ENCODE measurements at regions of chr6 and their contacts with region 1.

Region 1: DNA sequence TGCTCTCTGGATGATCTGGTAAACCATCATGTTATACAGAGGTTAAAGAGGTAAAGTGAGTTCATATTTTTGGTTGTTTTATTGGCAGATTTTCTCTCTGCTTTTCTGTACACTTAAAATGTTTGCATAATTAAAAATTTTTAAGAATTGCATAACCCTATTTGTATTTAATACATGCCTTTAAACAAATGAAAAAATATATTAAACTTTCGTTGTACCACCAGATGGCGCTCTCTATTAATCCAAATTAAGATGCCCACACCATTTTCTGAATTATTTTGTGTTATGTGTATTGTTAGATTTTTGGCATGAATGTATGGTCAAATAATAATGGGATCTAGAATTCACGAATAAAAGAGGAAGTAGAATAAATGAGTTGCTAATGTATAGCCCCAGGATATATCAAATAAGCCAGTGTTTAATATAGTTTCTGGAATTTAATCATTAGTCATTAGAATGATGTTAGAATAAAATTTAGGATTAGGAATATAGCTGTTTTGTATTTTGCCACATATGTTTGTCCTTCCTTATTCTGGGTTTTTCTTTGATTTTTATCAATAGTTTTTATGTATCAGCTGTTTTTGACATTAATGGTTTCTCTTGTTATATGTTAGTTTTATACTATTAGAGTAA is 38.9 kb downstream of the SMAP1 start:
- DNase-seq: no peak
- H3K4me3 ChIP-seq: no peak overlapping the region
- H3K27ac ChIP-seq: no peak overlapping the region
- H3K4me1 ChIP-seq: peaks cover 0 to 5% (median 0%) of the 10 kb centered on the region in 4 donors
- H3K27me3 ChIP-seq: no peaks in the 10 kb centered on the region
- CTCF ChIP-seq: peak; percentile 58 to 63

Region 2: GRCh38 chr6:70886661-70887060 is 180.1 kb after region 1 on chr6:
- intact Hi-C with region 1: loop called (anchors 5 kb)
- DNase-seq: no peak
- H3K4me3 ChIP-seq: no peak overlapping the region
- H3K27ac ChIP-seq: no peak overlapping the region
- H3K4me1 ChIP-seq: no peaks in the 10 kb centered on the region
- H3K27me3 ChIP-seq: no peaks in the 10 kb centered on the region
- CTCF ChIP-seq: no peak

Measured in tibial artery (tissue), 4 donors.